ENCODE measurements at regions of chr2 and their contacts with region 1.

Region 1: DNA sequence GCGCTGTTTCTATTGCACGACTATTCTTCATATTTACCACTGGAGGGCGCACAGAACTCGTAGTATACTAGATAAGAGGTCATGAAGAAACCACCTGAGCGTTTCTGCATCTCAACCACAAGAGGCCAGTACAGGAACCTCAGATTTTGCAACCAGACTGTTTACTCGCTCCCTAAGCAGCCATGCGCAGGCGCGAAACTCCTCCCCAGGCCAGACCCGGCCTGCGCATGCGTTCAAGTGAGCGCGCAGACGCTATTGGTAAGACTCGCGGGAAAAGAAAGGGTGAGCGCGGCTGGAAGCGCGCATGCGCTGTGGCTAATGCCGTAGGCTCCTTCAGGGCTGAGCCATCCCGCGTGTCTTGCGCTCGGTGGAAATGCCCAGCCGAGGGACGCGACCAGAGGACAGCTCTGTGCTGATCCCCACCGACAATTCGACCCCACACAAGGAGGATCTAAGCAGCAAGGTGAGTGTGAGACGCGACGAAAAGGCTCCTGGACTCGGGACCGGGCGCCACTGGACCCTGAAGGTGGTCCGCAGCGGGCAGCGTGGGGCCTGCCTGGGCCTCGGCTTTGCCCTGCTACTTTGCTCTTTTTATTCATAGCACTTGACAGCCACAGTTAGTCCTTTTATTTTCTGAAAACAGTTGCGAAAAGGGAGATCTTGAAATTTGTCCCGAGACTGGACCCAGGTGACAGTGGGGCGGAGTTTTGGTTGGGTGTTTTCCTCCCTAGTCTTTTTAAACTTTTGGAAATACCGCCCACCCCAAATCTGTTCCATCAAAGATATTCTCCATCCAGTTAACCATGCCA is at the start of gene ASNSD1:
- DNase-seq: peak; percentile 98 to 99
- ATAC-seq: peak; percentile 95 to 98 (median 98)
- H3K4me3 ChIP-seq: peak within 1 kb of the TSS; percentile 56 to 95 (median 78)
- H3K27ac ChIP-seq: peak within 1 kb of the TSS in 9 of 10 donors; percentile 78 to 94 (median 86)
- H3K4me1 ChIP-seq: peaks cover 0 to 55% (median 31%) of the 10 kb centered on the region in 9 donors
- H3K27me3 ChIP-seq: no peaks in the 10 kb centered on the region
- CTCF ChIP-seq: peak; percentile 93 to 100 (median 96)
- total RNA-seq, gene ASNSD1: 25.9 to 46.7 (median 30.8) TPM

Region 2: GRCh38 chr2:188983427-188984064 is 677.8 kb before region 1 on chr2:
- intact Hi-C with region 1: loop called in 1 of 10 experiments (anchors 10 kb)
- DNase-seq: no peak
- ATAC-seq: peak in 3 of 8 donors; percentile 12 to 33 (median 13)
- H3K4me3 ChIP-seq: peak overlapping the region in 5 of 10 donors; percentile 0 to 22 (median 4)
- H3K27ac ChIP-seq: peak overlapping the region in 8 of 10 donors; percentile 23 to 74 (median 48)
- H3K4me1 ChIP-seq: peaks cover 0 to 26% (median 0%) of the 10 kb centered on the region in 9 donors
- H3K27me3 ChIP-seq: no peaks in the 10 kb centered on the region
- CTCF ChIP-seq: peak in 7 of 9 donors; percentile 14 to 44 (median 35)

Region 3: GRCh38 chr2:189674374-189675112 is 13.2 kb after region 1 on chr2 and contains the start of gene ANKAR:
- intact Hi-C with region 1: loop called in 2 of 10 experiments (anchors 1 kb)
- DNase-seq: peak; percentile 89 to 92
- ATAC-seq: peak; percentile 97 to 100 (median 98)
- H3K4me3 ChIP-seq: peak within 1 kb of the TSS; percentile 49 to 82 (median 68)
- H3K27ac ChIP-seq: peak within 1 kb of the TSS; percentile 88 to 99 (median 98)
- H3K4me1 ChIP-seq: peaks cover 0 to 36% (median 23%) of the 10 kb centered on the region in 9 donors
- H3K27me3 ChIP-seq: no peaks in the 10 kb centered on the region
- CTCF ChIP-seq: peak; percentile 80 to 99 (median 91)
- total RNA-seq, gene ANKAR: 4.4 to 9.3 (median 5.8) TPM

Region 4: GRCh38 chr2:189698020-189698887 is 36.9 kb after region 1 on chr2:
- intact Hi-C with region 1: loop called in 9 of 10 experiments (anchors 1 to 5 kb)
- DNase-seq: peak in 1 of 2 donors; percentile 54
- ATAC-seq: peak in 6 of 8 donors; percentile 43 to 70 (median 62)
- H3K4me3 ChIP-seq: peak overlapping the region in 2 of 10 donors; percentile 12 to 23
- H3K27ac ChIP-seq: no peak overlapping the region
- H3K4me1 ChIP-seq: peaks cover 0 to 9% (median 0%) of the 10 kb centered on the region in 9 donors
- H3K27me3 ChIP-seq: no peaks in the 10 kb centered on the region
- CTCF ChIP-seq: peak; percentile 18 to 86 (median 69)

Region 5: DNA sequence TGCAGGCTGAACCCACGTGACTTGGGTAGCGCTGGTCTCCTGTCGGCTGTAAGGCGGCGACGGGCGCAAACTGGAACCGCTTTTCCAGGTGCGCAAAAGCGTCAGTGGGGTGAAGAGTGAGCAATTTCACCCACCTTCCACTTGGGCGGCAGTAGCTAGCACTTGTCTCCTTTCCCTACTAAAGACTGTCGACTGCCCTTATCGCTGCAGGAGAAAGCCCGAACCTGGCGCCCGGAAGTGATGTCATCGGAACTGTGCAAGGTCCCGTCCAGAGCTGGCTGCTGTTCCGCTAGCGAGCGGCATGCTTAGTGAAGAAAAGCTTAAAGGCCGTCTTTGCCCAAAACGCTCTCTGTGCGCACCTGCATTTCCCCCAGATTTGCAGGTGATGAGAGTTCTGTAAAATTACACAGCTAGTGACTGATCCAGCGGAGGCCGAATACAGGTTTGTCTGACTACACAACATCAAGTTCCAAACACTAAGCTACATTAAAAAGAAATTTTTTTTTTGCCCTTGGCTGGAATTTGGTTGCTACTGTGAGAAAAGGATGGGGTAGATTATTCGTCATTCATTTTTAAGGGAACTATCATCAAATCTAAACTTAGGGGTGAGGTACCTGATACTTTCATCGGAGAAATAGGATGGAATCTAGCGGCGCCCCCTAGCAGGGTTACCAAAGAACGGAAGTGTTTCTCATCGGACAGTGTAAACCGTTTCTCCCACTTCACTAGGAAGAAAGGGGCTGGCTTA is 101.4 kb after region 1 on chr2 and contains the start of gene OSGEPL1:
- intact Hi-C with region 1: loop called in 2 of 10 experiments (anchors 5 kb)
- DNase-seq: peak; percentile 90 to 94
- ATAC-seq: peak; percentile 95 to 99 (median 98)
- H3K4me3 ChIP-seq: peak within 1 kb of the TSS; percentile 67 to 83 (median 78)
- H3K27ac ChIP-seq: peak within 1 kb of the TSS; percentile 30 to 92 (median 87)
- H3K4me1 ChIP-seq: peaks cover 0 to 25% (median 16%) of the 10 kb centered on the region in 9 donors
- H3K27me3 ChIP-seq: no peaks in the 10 kb centered on the region
- CTCF ChIP-seq: peak in 8 of 9 donors; percentile 11 to 72 (median 52)
- total RNA-seq, gene OSGEPL1: 5.8 to 14.1 (median 9.9) TPM